GM10248 (cell line): ENCODE measurements at regions of chr19 and their contacts with region 1.

Region 1: DNA sequence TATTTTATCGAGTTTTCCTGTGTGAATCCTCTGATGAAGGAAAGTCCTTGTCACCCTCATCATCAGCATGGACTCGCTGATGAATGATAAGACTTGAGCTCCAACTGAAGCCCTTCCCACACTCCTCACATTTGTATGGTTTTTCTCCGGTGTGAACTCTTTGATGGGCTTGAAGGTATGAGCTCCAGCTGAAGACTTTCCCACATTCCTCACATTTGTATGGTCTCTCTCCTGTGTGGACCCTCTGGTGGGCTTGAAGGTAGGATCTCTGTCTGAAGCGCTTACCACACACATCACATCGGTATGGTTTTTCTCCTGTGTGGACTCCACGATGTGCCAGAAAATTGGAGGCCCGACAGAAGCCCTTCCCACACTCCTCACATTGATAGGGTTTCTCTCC is 21.7 kb downstream of the ZNF45 start:
- DNase-seq: no peak
- CTCF ChIP-seq: no peak

Region 2: DNA sequence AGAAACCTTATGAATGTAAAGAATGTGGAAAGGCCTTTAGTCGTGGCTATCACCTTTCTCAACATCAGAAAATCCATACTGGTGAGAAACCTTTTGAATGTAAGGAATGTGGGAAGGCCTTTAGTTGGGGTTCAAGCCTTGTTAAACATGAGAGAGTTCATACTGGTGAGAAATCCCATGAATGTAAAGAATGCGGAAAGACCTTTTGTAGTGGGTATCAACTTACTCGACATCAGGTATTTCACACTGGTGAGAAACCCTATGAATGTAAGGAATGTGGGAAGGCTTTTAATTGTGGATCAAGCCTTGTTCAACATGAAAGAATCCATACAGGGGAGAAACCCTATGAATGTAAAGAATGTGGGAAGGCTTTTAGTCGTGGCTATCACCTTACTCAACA is 65.5 kb before region 1 on chr19:
- CTCF ChIA-PET with region 1: no interaction called
- POLR2A ChIA-PET with region 1: no interaction called
- DNase-seq: no peak
- CTCF ChIP-seq: no peak

Region 3: DNA sequence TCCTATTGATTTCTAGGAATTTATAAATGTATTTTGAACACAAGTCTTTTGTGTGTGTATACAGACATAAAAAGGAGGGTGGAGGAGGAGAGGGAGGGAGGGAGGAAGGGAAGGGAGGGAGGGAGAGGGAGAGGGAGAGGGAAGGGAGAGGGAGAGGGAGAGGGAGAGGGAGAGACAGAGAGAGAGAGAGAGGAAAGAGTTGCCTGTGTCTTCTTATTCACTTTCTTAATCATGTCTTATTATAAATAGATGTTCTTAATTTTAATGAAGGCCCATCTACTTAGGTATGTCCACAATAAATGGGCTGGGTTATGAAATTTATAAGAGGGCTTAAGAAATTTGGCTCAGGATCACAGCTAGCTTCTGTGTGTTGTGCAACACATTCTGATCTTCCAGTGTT is 17.7 kb before region 1 on chr19:
- CTCF ChIA-PET with region 1: no interaction called
- POLR2A ChIA-PET with region 1: no interaction called
- DNase-seq: no peak
- CTCF ChIP-seq: no peak

Region 4: GRCh38 chr19:43923875-43924274 is 10.5 kb after region 1 on chr19:
- CTCF ChIA-PET with region 1: interaction called, 10 read pairs
- POLR2A ChIA-PET with region 1: no interaction called
- DNase-seq: no peak
- CTCF ChIP-seq: no peak